ENCODE measurements at regions of chr5 and their contacts with region 1.

Region 1: GRCh38 chr5:24539613-24540012 is 105.2 kb downstream of the CDH10 start:
- DNase-seq: no peak
- ATAC-seq: no peak
- H3K4me3 ChIP-seq: no peak overlapping the region
- H3K27ac ChIP-seq: no peak overlapping the region
- H3K4me1 ChIP-seq: no peaks in the 10 kb centered on the region
- H3K27me3 ChIP-seq: no peaks in the 10 kb centered on the region
- CTCF ChIP-seq: no peak

Region 2: GRCh38 chr5:23033864-23034263 is 1505.7 kb before region 1 on chr5:
- intact Hi-C with region 1: loop called in 1 of 10 experiments (anchors 5 kb)
- DNase-seq: no peak
- ATAC-seq: no peak
- H3K4me3 ChIP-seq: no peak overlapping the region
- H3K27ac ChIP-seq: no peak overlapping the region
- H3K4me1 ChIP-seq: peaks cover 0 to 5% (median 0%) of the 10 kb centered on the region in 9 donors
- H3K27me3 ChIP-seq: no peaks in the 10 kb centered on the region
- CTCF ChIP-seq: no peak

Measured in heart right ventricle (tissue), 16 donors.